Activated CD4-positive, alpha-beta T cell treated with anti-CD3 and anti-CD28 coated beads, Interleukin-2, amount 10 ng/mL, durations not matched to agents 24 days and 14 days (primary cell): ENCODE measurements at regions of chr15 and their contacts with region 1.

Region 1: DNA sequence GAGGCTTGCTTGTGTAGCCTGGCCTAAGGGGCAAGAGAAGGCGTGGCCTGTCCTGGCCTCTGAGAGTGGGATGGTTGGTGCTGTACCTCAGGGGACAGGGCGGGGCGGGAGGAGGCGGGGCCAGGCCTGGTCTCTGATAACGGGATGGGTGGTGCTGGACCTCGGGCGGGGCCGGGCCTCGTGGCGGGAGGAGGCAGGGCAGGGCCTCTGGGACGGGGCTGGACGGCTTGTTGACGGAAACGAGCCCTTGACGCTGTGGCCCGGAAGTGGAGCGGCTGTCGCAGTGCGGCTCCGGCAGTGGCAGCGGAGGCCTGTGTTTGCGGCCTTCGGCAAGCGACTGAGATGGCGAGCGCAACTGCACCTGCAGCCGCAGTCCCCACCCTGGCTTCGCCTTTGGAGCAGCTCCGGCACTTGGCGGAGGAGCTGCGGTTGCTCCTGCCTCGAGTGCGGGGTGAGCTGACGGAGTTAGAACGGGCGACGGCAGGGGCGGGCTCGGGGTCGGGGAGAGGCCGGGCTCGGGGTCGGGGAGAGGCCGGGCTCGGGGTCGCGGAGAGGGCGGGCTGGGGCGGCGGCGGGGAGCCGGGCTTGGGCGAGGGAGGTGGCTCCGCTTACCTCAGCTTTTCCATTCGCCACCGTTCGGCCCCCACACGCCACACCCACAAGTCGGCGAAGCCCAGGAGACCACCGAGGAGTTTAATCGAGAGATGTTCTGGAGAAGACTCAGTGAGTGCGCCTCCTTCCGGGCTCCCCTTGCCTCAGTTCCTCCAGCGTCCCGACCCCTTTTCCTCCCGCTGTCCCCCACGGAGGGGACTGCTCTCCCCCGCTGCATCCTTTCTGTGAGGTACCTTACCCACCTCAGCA is at the start of gene CCNDBP1:
- DNase-seq: peak; percentile 97
- H3K4me3 Mint-ChIP-seq: peak within 1 kb of the TSS; percentile 96
- H3K27ac Mint-ChIP-seq: peak within 1 kb of the TSS; percentile 97
- H3K4me1 Mint-ChIP-seq: peaks cover 26% of the 10 kb centered on the region
- H3K27me3 Mint-ChIP-seq: no peaks in the 10 kb centered on the region
- total RNA-seq, gene CCNDBP1: 49.2 and 54.1 TPM in 2 replicates

Region 2: DNA sequence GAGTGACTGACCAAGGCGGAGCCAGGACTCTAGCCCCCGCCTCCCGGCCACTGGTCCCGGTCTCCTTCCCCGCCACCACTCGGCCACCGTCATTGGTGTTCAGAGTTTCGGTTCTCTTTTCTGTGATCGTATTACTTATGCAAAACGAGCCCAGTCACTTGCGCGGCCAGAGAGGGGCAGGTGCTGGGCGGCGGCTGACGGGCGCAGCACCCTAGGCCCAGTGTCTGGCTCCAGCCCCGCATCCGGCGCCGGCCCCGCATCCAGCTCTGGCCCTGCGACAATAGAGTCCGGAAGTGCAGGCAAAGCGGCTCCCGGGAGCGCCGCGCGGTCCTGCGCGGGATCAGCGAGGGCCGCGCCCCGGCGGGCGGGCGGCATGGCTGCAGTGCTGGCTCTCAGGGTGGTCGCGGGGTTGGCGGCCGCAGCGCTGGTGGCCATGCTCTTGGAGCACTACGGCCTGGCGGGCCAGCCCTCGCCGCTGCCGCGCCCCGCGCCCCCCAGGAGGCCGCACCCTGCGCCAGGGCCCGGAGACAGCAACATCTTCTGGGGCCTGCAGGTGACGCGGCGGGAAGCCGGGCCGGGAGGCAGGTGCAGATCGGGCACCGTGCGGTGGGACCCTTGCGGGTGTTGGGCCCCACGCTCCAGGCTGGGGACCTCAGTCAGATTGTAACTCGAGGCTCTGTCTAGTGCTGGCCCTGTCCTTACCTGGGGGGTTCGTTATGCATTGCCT is 51.8 kb before region 1 on chr15 and contains the start of gene TMEM62:
- intact Hi-C with region 1: loop called (anchors 5 kb)
- DNase-seq: peak; percentile 92
- H3K4me3 Mint-ChIP-seq: peak within 1 kb of the TSS; percentile 89
- H3K27ac Mint-ChIP-seq: peak within 1 kb of the TSS; percentile 92
- H3K4me1 Mint-ChIP-seq: peaks cover 25% of the 10 kb centered on the region
- H3K27me3 Mint-ChIP-seq: peaks cover 8% of the 10 kb centered on the region
- total RNA-seq, gene TMEM62: 14.7 and 18.7 TPM in 2 replicates

Region 3: DNA sequence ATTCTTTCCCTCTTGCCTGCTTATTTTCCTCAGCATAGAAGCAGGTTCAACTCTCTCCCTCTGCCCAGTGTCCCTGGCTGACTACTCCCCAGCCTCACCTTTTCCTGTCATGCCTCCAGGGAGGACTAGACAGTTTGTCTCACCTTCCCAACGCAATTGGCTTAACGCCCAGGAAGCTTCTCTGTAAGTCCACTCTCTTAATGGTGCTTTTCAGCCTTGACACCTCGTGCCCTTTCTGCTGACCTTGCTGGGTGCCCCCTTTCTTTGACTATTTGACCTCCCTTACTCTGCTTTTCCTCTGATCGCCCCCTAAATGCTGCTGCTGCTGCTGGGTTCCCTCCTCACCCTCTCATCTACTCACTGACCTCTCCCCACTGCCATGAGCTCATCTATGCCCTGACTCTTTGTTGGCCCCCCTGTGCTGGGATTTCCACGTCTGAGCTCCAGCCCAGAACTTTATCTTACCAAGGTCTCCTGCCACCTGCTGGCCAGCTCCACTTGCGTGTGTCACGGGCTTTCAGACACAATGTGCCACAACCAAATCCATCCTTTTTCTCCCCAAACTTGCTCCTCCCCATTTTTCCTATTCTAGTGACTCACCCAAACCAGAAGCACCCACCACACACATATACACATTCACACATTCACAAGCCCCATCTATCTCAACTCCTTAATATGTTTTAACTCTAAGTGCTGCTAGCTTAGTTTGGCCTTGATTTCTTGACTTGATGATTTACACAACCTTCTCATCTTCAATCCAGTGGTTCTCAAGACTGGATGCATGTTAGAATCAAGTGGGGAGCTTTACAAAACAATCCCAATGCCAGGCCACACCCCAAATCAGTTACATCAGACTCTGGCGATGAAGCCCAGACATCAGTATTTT is 18.9 kb after region 1 on chr15:
- intact Hi-C with region 1: loop called (anchors 2 kb)
- DNase-seq: peak; percentile 85
- H3K4me3 Mint-ChIP-seq: no peak overlapping the region
- H3K27ac Mint-ChIP-seq: no peak overlapping the region
- H3K4me1 Mint-ChIP-seq: peaks cover 12% of the 10 kb centered on the region
- H3K27me3 Mint-ChIP-seq: peaks cover 13% of the 10 kb centered on the region

Region 4: DNA sequence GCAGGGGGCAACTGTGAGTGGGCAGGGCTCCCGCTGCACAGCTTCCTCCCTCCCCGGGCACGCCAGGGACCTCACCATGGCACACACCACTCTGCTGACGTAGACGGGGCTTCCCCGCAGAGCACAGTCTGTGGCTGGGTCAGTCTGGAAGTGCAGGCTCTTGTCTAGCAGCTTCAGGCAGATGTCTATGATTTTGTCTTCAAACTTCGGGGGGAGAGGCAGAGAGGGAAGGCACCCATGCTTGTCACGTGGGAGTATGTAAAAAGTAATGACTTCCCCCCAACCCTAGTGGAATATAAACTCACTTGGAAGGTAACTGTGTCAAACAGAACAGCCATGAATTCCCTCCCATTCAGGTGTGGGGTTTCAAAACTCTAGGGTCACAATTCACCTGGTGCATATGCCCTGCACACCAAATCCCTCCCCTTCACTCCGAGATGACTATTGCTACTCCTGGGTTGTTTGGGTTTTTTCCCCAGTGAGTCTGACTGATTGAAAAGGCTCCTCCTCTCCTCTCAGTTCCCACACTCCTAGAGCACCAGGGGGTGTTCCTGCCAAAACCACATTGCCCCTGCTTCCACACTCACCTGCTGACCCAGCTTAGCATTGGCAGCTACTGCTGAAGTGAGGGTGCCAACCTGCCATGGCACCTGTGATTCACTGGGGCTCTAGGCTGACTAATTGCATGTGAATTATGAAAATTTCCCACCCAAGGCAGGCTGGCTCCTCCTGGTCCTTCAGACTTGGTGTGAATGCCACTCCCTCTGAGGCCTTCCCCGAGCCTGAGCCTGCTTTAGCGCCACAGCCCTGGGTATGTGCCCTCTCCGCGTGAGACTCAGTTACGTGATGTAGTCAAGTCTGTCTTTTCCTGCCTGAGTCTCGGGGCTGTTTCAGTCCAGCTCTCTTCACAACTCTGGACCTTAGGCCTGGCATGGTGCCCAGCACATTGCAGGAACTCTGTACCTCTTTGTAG is 68.3 kb after region 1 on chr15:
- intact Hi-C with region 1: no loop called
- DNase-seq: no peak
- H3K4me3 Mint-ChIP-seq: no peak overlapping the region
- H3K27ac Mint-ChIP-seq: no peak overlapping the region
- H3K4me1 Mint-ChIP-seq: peaks cover 39% of the 10 kb centered on the region
- H3K27me3 Mint-ChIP-seq: no peaks in the 10 kb centered on the region

Region 5: GRCh38 chr15:43800286-43801141 is 615.1 kb after region 1 on chr15 and contains the start of gene HYPK:
- intact Hi-C with region 1: loop called (anchors 10 kb)
- DNase-seq: peak; percentile 98
- H3K4me3 Mint-ChIP-seq: peak within 1 kb of the TSS; percentile 96
- H3K27ac Mint-ChIP-seq: peak within 1 kb of the TSS; percentile 98
- H3K4me1 Mint-ChIP-seq: peaks cover 34% of the 10 kb centered on the region
- H3K27me3 Mint-ChIP-seq: no peaks in the 10 kb centered on the region
- total RNA-seq, gene HYPK: 20.3 and 33.8 TPM in 2 replicates